ENCODE measurements at regions of chr3 and their contacts with region 1.

Region 1: GRCh38 chr3:49906004-49906743 is 2.5 kb upstream of the MST1R start:
- DNase-seq: peak; percentile 54
- H3K4me3 Mint-ChIP-seq: no peak overlapping the region
- H3K27ac Mint-ChIP-seq: peak overlapping the region; percentile 65
- H3K4me1 Mint-ChIP-seq: peaks cover 27% of the 10 kb centered on the region
- H3K27me3 Mint-ChIP-seq: no peaks in the 10 kb centered on the region

Region 2: DNA sequence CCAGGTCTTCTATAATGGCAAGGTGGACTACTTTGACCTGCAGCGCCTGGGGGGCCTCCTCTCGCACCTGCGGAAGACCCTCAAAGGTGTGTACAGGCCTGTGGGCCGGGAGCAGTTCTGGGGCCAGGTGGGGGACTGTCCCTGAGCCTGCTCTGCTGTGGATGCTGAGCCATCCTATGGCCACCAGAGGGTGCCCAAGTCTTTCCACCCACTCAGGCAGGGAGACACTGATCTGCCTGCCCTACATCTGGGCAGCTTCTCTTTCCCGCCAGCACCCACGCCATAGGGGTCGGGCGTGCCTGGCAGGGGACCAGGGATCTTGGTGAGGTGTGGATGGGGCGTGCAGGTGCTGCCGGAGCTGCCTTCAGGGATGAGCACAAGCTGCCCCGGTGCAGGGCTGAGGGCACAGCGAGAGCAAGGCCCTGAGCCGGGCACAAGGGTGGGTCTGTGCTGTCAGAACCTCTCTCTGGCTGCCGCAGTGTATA is 202.7 kb before region 1 on chr3:
- CTCF ChIA-PET with region 1: no interaction called
- intact Hi-C with region 1: loop called (anchors 5 kb)
- DNase-seq: peak; percentile 78
- H3K4me3 Mint-ChIP-seq: no peak overlapping the region
- H3K27ac Mint-ChIP-seq: no peak overlapping the region
- H3K4me1 Mint-ChIP-seq: no peaks in the 10 kb centered on the region
- H3K27me3 Mint-ChIP-seq: no peaks in the 10 kb centered on the region

Region 3: GRCh38 chr3:49723628-49724551 is 182.3 kb before region 1 on chr3 and contains the start of gene GMPPB:
- CTCF ChIA-PET with region 1: no interaction called
- intact Hi-C with region 1: loop called (anchors 2 kb)
- DNase-seq: peak; percentile 96
- H3K4me3 Mint-ChIP-seq: peak within 1 kb of the TSS; percentile 96
- H3K27ac Mint-ChIP-seq: peak within 1 kb of the TSS; percentile 95
- H3K4me1 Mint-ChIP-seq: peaks cover 33% of the 10 kb centered on the region
- H3K27me3 Mint-ChIP-seq: no peaks in the 10 kb centered on the region
- total RNA-seq, gene GMPPB: 25.6 to 27.4 TPM

Region 4: DNA sequence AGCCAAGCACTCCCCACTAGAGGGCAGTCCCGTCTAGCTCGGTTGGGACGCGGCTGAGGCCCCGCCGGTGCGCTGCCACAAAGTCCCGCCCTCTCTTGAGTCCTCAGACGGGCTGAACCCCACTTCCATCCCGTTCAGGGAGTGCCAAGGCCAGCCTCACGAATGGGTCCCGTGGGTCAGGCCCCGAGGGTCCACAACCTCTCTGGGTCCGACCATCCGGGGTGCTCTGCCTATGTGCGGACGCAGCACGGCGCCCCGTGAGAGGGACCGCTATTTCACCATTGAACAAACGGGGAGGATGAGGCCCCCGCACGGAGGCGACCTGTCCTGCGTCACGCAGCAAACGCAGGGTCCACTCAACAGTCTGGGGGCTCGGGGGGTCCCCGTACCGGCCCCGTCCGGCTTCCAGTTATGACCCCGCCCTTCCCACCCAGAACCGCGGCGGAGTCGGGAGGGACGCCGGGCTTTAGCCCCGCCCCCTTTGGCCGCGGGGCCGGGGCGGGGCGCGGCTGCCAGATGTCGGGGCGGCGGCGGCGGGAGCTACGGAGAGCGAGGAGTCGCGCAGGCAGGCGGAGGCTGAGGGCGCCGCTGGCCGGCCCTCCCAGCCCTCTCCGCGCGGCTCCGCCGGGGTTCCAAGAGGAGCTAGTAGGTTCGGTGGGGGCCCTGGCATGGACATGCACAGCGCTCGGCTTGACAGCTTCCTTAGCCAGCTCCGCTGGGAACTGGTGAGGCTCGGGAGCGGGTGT is 103.3 kb before region 1 on chr3 and contains the start of gene INKA1:
- CTCF ChIA-PET with region 1: interaction called, 17 read pairs
- intact Hi-C with region 1: loop called (anchors 1 kb)
- DNase-seq: peak; percentile 93
- H3K4me3 Mint-ChIP-seq: peak within 1 kb of the TSS; percentile 82
- H3K27ac Mint-ChIP-seq: peak within 1 kb of the TSS; percentile 54
- H3K4me1 Mint-ChIP-seq: peaks cover 41% of the 10 kb centered on the region
- H3K27me3 Mint-ChIP-seq: peaks cover 2% of the 10 kb centered on the region
- total RNA-seq, gene INKA1: 0.33 to 0.37 TPM

Region 5: DNA sequence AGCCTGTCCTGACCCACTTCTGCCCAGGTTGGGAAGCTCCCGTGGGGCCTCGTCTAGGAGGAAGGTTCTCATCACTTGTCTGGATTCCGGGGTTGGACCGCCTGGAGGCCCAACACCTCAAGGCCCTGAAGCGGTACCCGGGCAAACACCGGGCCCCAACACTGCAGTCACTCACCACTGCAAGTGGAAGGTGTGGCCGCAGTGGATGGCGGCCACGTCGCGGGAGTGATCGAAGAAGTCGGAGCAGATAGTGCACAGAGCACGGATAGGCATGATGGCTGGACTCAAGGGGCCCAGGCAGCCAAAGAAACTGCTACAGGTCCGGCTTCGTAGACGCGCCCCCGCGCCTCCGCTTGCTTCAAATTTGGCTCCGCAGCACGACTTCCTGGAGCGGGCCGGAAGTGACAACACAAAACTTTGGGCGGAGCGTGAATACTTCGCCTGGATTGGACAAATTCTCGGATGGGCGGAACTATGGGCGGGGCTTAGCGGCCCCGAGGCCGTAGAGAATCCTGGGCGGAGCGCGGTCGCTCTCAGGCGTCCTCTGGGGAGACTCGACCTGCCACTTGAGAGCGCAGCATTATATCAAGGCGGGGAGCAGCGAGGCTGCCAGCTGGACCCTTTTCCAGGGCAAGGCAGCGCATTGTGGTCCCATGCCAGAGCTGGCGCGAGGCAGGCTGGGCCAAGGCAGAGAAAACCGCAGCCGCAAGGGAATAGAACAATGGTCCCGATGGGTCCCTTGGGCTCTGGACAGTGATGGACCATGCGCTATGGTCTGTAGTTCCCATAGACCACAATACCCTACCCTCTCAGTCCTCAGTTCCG is 49.8 kb before region 1 on chr3 and contains the start of gene TRAIP:
- CTCF ChIA-PET with region 1: interaction called, 4 read pairs
- intact Hi-C with region 1: loop called (anchors 1 kb)
- DNase-seq: peak; percentile 97
- H3K4me3 Mint-ChIP-seq: peak within 1 kb of the TSS; percentile 94
- H3K27ac Mint-ChIP-seq: peak within 1 kb of the TSS; percentile 65
- H3K4me1 Mint-ChIP-seq: peaks cover 13% of the 10 kb centered on the region
- H3K27me3 Mint-ChIP-seq: no peaks in the 10 kb centered on the region
- total RNA-seq, gene TRAIP: 21.5 to 25.7 TPM

Region 6: GRCh38 chr3:49939858-49940666 is 33.9 kb after region 1 on chr3 and contains the start of gene RBM6:
- CTCF ChIA-PET with region 1: no interaction called
- intact Hi-C with region 1: loop called (anchors 1 kb)
- DNase-seq: peak; percentile 98
- H3K4me3 Mint-ChIP-seq: peak within 1 kb of the TSS; percentile 98
- H3K27ac Mint-ChIP-seq: peak within 1 kb of the TSS; percentile 93
- H3K4me1 Mint-ChIP-seq: peaks cover 29% of the 10 kb centered on the region
- H3K27me3 Mint-ChIP-seq: no peaks in the 10 kb centered on the region
- total RNA-seq, gene RBM6: 89.1 to 98.2 TPM